Activated CD4-positive, alpha-beta T cell treated with anti-CD3 and anti-CD28 coated beads for 36 hours (primary cell): ENCODE measurements at regions of chr14 and their contacts with region 1.

Region 1: GRCh38 chr14:34098045-34098984 is 147.4 kb upstream of the EGLN3 start:
- DNase-seq: peak; percentile 46
- ATAC-seq: no peak
- H3K4me3 Mint-ChIP-seq: no peak overlapping the region
- H3K27ac Mint-ChIP-seq: no peak overlapping the region
- H3K4me1 Mint-ChIP-seq: peaks cover 3% of the 10 kb centered on the region
- H3K27me3 Mint-ChIP-seq: no peaks in the 10 kb centered on the region

Region 2: DNA sequence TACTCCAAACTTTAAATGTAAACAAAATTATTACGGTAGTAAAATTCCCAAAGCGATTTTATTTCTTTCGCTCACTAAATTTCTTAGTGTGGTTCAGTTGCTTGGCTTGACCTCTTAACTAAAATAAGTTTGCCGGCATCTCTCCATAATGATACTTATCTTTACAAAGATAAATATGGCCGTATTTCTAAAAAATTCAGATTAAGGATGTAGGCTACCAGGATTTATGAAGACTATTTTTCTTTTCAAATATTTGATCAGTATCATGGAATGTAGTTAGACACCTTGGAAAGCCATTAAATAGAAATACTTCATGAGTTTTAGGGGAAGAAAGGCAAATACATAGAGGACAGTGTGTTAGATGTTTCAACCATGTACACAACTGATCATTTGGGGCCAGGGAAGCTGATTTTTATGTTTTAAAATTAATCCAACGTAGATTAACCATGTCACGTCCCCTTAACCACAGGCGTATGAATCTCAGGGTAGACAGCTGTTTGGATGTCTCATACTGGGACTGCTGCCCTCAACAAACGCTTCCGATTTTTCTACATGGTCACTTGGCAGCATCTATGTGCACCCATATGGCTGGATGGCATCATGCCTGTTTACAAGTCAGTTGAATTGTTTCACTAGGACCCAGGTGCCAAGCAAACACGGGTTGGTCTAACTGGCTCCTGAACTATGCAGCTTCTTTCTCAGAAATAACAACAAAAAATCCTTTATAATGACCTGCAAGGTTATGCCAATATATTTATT is 766.0 kb before region 1 on chr14:
- CTCF ChIA-PET with region 1: no interaction called
- POLR2A ChIA-PET with region 1: no interaction called
- intact Hi-C with region 1: no loop called
- DNase-seq: no peak
- ATAC-seq: no peak
- H3K4me3 Mint-ChIP-seq: no peak overlapping the region
- H3K27ac Mint-ChIP-seq: no peak overlapping the region
- H3K4me1 Mint-ChIP-seq: no peaks in the 10 kb centered on the region
- H3K27me3 Mint-ChIP-seq: no peaks in the 10 kb centered on the region

Region 3: GRCh38 chr14:33839193-33840076 is 258.9 kb before region 1 on chr14:
- CTCF ChIA-PET with region 1: interaction called, 10 read pairs
- POLR2A ChIA-PET with region 1: no interaction called
- intact Hi-C with region 1: loop called (anchors 1 to 5 kb)
- DNase-seq: peak; percentile 68
- ATAC-seq: peak; percentile 53
- H3K4me3 Mint-ChIP-seq: no peak overlapping the region
- H3K27ac Mint-ChIP-seq: no peak overlapping the region
- H3K4me1 Mint-ChIP-seq: no peaks in the 10 kb centered on the region
- H3K27me3 Mint-ChIP-seq: no peaks in the 10 kb centered on the region

Region 4: DNA sequence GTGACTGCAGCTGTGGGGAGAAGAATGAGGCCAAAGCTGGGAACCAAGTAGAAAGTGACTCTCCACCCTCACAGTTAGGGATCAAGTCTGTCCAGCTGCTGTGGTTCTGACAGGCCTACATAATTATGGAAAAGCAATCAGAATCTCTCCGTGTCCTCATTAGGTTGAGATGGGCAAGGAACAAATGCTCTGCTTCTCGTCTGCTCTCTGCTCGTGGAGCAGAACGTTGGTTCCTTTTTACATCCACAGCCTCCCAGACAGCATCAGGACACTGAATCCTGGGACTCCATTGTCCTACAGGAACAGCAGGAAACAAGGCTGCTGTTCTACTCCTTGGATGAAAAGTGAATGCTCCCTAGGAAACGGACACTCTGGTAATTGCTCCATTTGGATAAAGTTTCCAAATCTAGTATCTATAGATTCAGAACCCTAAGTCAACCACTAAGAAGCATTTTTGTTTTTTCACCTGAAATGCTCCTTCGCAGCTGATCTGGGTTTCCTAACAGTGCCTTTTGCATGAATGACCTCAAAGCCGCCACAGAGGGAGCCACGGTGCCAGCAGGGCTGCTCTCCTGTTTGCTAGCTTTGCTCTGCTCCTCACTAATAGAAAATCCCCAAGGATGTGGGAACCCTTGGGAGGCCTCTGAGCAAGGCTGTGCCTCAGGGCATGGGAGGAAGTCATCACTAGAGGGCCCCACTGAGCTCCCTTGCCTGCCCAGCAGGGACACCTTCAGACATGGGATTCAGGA is 249.4 kb before region 1 on chr14:
- CTCF ChIA-PET with region 1: interaction called, 15 read pairs
- POLR2A ChIA-PET with region 1: no interaction called
- intact Hi-C with region 1: no loop called
- DNase-seq: peak; percentile 56
- ATAC-seq: peak; percentile 60
- H3K4me3 Mint-ChIP-seq: no peak overlapping the region
- H3K27ac Mint-ChIP-seq: no peak overlapping the region
- H3K4me1 Mint-ChIP-seq: no peaks in the 10 kb centered on the region
- H3K27me3 Mint-ChIP-seq: no peaks in the 10 kb centered on the region

Region 5: GRCh38 chr14:33950320-33951182 is 147.8 kb before region 1 on chr14 and contains the start of gene EGLN3:
- CTCF ChIA-PET with region 1: interaction called, 3 read pairs
- POLR2A ChIA-PET with region 1: no interaction called
- intact Hi-C with region 1: loop called in 1 of 2 experiments (anchors 5 kb)
- DNase-seq: peak; percentile 78
- ATAC-seq: peak; percentile 93
- H3K4me3 Mint-ChIP-seq: peak within 1 kb of the TSS; percentile 77
- H3K27ac Mint-ChIP-seq: peak within 1 kb of the TSS; percentile 55
- H3K4me1 Mint-ChIP-seq: peaks cover 22% of the 10 kb centered on the region
- H3K27me3 Mint-ChIP-seq: peaks cover 45% of the 10 kb centered on the region
- total RNA-seq, gene EGLN3: 3.8 to 3.9 TPM